Activated T-helper 2 cell treated with anti-CD3 and anti-CD28 coated beads, Interferon-gamma antibody, Interleukin-2, Interleukin-4, amounts not matched to agents 10 μg/mL and 5 μg/mL and 100 μg/mL, durations not matched to agents 14 hours and 24 hours and 36 hours (primary cell): ENCODE measurements at regions of chrX and their contacts with region 1.

Region 1: DNA sequence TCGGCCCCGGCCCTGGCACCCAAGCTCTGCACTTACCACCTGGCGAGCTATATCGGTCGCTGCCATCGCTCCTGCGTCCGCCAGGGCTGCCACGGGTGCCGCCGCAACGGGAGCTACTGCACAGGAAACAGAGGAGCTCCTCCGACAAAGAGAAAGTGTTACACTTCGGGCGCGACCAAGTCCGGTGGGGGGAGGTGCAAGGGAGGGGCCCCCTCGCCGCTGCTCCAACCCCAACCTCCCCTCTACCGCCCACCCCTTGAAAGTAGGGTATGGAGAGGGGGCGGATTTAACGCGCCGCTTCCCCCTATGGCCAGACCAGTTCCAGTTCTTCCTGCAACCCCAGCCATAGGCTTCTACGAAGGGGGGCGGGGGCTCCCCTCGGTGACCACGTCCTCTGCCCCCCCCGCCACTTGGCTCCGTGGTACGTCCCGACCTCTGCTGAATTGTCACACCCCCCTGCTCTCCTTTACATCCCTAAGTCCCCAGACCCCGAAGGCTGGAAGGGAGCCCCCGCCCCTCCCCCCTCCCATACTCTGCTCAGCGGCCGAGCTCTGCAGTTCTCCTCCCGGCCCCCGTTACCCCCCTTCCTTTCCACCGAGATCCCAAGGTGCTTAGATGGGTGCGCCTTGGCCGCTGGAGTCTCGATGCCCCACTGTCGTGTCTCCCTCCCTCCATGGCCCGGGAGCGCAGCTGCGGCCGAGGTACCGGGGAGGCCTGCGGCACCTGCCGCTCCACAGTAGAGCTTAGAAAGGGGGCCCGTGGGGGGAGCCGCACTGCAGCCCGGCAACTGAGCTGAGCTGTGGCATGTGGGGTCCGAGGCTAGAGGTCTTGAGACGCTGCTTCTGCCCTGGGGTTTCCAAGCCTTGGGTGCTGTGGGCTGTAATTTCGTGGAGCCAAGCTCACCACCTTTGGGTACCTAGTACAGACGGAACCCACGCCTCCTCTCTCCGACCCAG is at the start of gene SEPTIN6:
- DNase-seq: peak; percentile 80
- H3K4me3 Mint-ChIP-seq: peak within 1 kb of the TSS; percentile 90
- H3K27ac Mint-ChIP-seq: peak within 1 kb of the TSS; percentile 100
- H3K4me1 Mint-ChIP-seq: peaks cover 10% of the 10 kb centered on the region
- H3K27me3 Mint-ChIP-seq: no peaks in the 10 kb centered on the region
- total RNA-seq, gene SEPTIN6: 175 and 179 TPM in 2 replicates

Region 2: GRCh38 chrX:119235872-119236622 is 457.3 kb before region 1 on chrX and contains the start of gene PGRMC1:
- intact Hi-C with region 1: loop called (anchors 5 kb)
- DNase-seq: peak; percentile 74
- H3K4me3 Mint-ChIP-seq: peak within 1 kb of the TSS; percentile 90
- H3K27ac Mint-ChIP-seq: peak within 1 kb of the TSS; percentile 77
- H3K4me1 Mint-ChIP-seq: peaks cover 13% of the 10 kb centered on the region
- H3K27me3 Mint-ChIP-seq: peaks cover 22% of the 10 kb centered on the region
- total RNA-seq, gene PGRMC1: 45.2 and 46.0 TPM in 2 replicates

Region 3: GRCh38 chrX:119516157-119516702 is 177.1 kb before region 1 on chrX:
- intact Hi-C with region 1: loop called (anchors 10 kb)
- DNase-seq: peak; percentile 17
- H3K4me3 Mint-ChIP-seq: no peak overlapping the region
- H3K27ac Mint-ChIP-seq: peak overlapping the region; percentile 26
- H3K4me1 Mint-ChIP-seq: peaks cover 4% of the 10 kb centered on the region
- H3K27me3 Mint-ChIP-seq: no peaks in the 10 kb centered on the region

Region 4: DNA sequence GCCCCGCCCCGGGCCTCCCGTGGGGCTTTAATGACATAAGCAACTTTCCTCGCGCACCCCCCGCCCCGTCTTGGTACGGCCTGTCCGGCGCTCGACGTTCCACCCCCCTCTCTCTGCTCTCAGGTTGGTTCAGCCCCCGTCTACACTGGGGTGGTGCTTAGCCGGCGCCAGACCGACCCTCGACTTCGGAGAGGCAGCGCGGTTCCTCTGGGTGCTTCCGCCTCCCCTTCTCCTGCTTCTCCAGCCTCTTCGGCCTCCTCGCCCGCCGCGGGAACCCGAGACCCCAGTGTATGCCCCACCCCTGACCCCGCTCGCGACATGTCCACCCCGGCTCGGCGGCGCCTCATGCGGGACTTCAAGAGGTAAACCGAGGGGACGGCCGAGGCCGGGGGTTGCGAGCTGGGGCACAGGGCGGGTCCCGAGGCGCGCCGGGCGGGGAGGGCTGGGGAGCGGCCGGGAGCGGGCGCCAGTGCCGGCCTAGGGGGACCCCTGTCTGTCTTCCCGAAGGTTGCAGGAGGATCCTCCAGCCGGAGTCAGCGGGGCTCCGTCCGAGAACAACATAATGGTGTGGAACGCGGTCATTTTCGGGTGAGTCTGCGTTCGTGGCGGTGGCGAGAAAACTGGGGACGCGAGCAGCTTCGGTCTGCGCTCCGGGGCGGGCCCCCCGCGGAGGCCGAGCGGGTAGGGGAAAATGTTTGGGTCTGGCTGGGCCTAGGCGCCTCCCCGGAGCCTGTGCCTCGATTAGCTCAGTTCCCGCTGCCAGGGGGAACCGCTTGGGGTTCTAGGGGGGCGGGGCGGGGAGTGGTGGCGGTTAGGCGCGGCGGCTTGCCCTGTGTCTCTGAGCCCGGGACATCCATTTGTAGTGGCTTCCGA is 118.7 kb before region 1 on chrX and contains the start of gene UBE2A:
- intact Hi-C with region 1: loop called (anchors 1 kb)
- DNase-seq: peak; percentile 82
- H3K4me3 Mint-ChIP-seq: peak within 1 kb of the TSS; percentile 91
- H3K27ac Mint-ChIP-seq: peak within 1 kb of the TSS; percentile 90
- H3K4me1 Mint-ChIP-seq: peaks cover 15% of the 10 kb centered on the region
- H3K27me3 Mint-ChIP-seq: no peaks in the 10 kb centered on the region
- total RNA-seq, gene UBE2A: 60.6 and 61.6 TPM in 2 replicates

Region 5: DNA sequence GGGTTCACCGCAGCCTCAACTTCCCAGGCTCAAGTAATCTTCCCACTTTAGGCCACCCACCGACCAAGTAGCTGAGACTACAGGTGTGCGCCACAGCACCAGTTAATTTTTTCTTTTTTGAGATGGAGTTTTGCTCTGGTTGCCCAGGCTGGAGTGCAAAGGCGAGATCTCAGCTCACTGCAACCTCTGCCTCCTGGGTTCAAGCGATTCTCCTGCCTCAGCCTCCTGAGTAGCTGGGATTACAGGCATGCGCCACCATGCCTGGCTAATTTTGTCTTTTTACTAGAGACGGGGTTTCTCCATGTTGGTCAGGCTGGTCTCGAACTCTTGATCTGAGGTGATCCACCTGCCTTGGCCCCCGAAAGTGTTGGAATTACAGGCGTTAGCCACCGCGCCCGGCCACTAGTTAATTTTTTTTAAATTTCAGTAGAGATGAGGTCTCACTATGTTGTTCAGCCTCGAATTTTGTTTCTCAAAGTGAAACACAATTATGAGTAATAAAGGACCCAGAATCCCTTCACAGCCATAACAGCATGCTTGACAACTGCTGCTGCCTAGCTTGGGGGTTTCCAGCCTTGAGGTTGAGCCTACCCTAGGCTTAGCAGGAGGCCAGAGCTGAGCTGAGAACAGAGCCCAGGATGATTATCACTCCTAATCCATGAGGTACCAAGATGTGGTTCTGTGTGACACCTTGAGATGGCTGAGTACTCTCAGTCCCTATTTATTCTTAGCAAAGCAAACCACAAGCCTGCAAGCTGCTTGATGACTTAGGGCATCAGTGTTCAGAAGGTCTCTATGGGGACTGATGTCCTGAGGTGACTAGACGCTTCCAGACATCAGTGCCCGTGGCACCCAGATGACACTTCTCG is 45.5 kb before region 1 on chrX:
- intact Hi-C with region 1: loop called (anchors 1 kb)
- DNase-seq: peak; percentile 27
- H3K4me3 Mint-ChIP-seq: no peak overlapping the region
- H3K27ac Mint-ChIP-seq: peak overlapping the region; percentile 85
- H3K4me1 Mint-ChIP-seq: peaks cover 17% of the 10 kb centered on the region
- H3K27me3 Mint-ChIP-seq: no peaks in the 10 kb centered on the region

Region 6: GRCh38 chrX:119661486-119661885 is 31.8 kb before region 1 on chrX:
- intact Hi-C with region 1: no loop called
- DNase-seq: no peak
- H3K4me3 Mint-ChIP-seq: no peak overlapping the region
- H3K27ac Mint-ChIP-seq: no peak overlapping the region
- H3K4me1 Mint-ChIP-seq: peaks cover 20% of the 10 kb centered on the region
- H3K27me3 Mint-ChIP-seq: no peaks in the 10 kb centered on the region

Region 7: GRCh38 chrX:119791438-119792231 is 98.3 kb after region 1 on chrX and contains the start of gene RPL39:
- intact Hi-C with region 1: loop called (anchors 5 kb)
- DNase-seq: peak; percentile 78
- H3K4me3 Mint-ChIP-seq: peak within 1 kb of the TSS; percentile 95
- H3K27ac Mint-ChIP-seq: peak within 1 kb of the TSS; percentile 92
- H3K4me1 Mint-ChIP-seq: peaks cover 8% of the 10 kb centered on the region
- H3K27me3 Mint-ChIP-seq: no peaks in the 10 kb centered on the region
- total RNA-seq, gene RPL39: 2,137 and 2,151 TPM in 2 replicates